ENCODE measurements at regions of chr6 and their contacts with region 1.

Region 1: DNA sequence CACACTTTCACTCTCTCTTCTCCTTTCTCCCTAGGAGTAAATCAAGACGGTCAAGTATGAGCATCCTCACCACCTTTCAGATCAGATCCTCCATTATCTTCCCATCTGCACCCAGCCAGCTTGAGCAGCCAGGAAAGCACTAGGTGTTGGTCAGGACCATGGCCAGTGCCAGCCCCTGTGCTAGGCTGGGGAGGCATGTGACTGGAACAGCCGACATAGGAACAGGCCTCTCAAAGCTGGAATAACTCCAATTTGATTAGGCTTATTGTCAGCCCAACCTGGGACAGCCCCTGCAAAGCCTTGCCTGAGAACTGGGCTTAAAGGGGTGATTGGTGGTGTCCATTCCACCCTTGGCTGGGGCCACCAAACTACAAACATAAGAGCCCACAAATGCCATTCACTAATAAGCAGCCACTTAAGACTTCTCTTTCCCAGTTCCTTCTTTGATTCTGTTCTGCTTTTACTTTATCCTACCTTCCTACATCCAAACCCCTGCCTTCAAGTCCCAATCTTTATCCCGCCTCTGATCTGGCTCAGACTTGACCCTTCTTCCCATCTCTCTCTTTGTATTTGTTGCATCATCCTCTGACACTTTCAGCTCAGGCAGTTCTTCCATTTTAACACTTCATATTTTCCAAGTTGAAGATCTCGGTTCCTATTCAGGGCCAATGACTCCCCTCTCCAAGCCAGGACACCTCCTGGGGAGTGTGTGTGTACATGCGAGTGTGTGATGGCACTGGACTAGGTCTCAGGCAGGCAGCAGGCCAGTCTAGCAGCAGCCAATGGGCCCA is 4.5 kb upstream of the TREM2 start:
- H3K4me3 ChIP-seq: no peak overlapping the region
- H3K27ac ChIP-seq: no peak overlapping the region
- H3K4me1 ChIP-seq: no peaks in the 10 kb centered on the region
- CTCF ChIP-seq: no peak

Region 2: GRCh38 chr6:41182069-41183034 is 15.0 kb after region 1 on chr6:
- CTCF ChIA-PET with region 1: interaction called, 12 read pairs
- POLR2A ChIA-PET with region 1: no interaction called
- H3K4me3 ChIP-seq: no peak overlapping the region
- H3K27ac ChIP-seq: no peak overlapping the region
- H3K4me1 ChIP-seq: no peaks in the 10 kb centered on the region
- CTCF ChIP-seq: peak; percentile 41; the same call in 1 of the 2 replicates